Caco-2 (cell line): ENCODE measurements at regions of chr3 and their contacts with region 1.

Region 1: GRCh38 chr3:197456261-197457091 is 99.3 kb downstream of the BDH1 start:
- DNase-seq: peak; percentile 89 to 90
- H3K4me3 ChIP-seq: peak overlapping the region; percentile 54
- H3K4me3 Mint-ChIP-seq: peak overlapping the region; percentile 87
- H3K27ac Mint-ChIP-seq: peak overlapping the region; percentile 90
- H3K4me1 ChIP-seq: peaks cover 31% of the 10 kb centered on the region
- H3K4me1 Mint-ChIP-seq: peaks cover 18% of the 10 kb centered on the region
- H3K27me3 ChIP-seq: no peaks in the 10 kb centered on the region
- H3K27me3 Mint-ChIP-seq: no peaks in the 10 kb centered on the region
- CTCF ChIP-seq: no peak

Region 2: DNA sequence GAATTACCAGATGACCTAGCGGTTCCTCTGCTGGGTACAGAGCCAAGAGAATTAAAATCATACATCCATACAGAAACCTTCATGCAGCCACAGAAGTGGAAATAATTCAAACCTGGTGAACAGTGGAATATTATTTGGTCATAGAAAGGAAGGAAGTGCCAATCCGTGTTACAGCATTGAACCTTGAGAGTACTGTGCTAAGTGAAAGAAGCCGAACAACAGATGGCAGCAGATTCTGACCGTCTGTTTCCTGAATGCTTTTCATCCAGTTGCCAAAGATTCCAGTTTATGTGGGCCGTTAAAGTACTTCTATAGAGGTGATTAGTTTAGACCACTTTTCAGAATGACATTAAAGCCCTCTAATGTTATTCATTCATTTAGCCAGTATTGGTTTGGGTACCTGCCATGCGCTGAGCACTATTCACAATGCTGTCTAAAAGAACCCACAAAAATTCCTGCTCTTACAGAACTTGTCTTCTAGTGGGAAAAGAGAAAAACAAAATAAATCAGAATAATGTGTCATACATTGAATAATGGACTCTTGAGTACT is 634.6 kb before region 1 on chr3:
- CTCF ChIA-PET with region 1: no interaction called
- POLR2A ChIA-PET with region 1: no interaction called
- intact Hi-C with region 1: no loop called
- DNase-seq: no peak
- H3K4me3 ChIP-seq: no peak overlapping the region
- H3K4me3 Mint-ChIP-seq: no peak overlapping the region
- H3K27ac Mint-ChIP-seq: no peak overlapping the region
- H3K4me1 ChIP-seq: no peaks in the 10 kb centered on the region
- H3K4me1 Mint-ChIP-seq: no peaks in the 10 kb centered on the region
- H3K27me3 ChIP-seq: no peaks in the 10 kb centered on the region
- H3K27me3 Mint-ChIP-seq: no peaks in the 10 kb centered on the region
- CTCF ChIP-seq: no peak

Region 3: GRCh38 chr3:197224034-197224444 is 232.4 kb before region 1 on chr3:
- CTCF ChIA-PET with region 1: no interaction called
- POLR2A ChIA-PET with region 1: no interaction called
- intact Hi-C with region 1: loop called (anchors 2 kb)
- DNase-seq: peak in 1 of 2 experiments; percentile 47
- H3K4me3 ChIP-seq: no peak overlapping the region
- H3K4me3 Mint-ChIP-seq: no peak overlapping the region
- H3K27ac Mint-ChIP-seq: no peak overlapping the region
- H3K4me1 ChIP-seq: peaks cover 41% of the 10 kb centered on the region
- H3K4me1 Mint-ChIP-seq: peaks cover 8% of the 10 kb centered on the region
- H3K27me3 ChIP-seq: no peaks in the 10 kb centered on the region
- H3K27me3 Mint-ChIP-seq: no peaks in the 10 kb centered on the region
- CTCF ChIP-seq: peak; percentile 52 to 68

Region 4: DNA sequence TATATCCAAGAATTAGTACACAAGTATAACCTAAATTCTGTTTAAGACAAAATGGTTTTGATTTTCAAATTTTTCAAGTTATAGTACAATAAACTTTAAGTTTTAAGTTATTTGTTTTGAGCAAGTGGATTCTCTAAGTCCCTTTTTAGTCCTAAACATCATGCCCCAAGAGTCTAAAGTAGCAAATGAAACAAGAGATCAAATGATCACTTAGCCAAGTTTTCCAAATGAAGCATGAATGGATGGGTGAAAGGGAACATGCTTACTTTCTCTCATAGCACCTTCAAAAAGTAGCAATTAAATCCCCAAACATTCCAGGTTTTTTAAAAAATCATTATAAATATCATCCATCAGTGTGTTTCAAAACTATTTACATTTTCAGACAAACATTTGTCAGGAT is 177.5 kb before region 1 on chr3:
- CTCF ChIA-PET with region 1: interaction called, 4 read pairs
- POLR2A ChIA-PET with region 1: no interaction called
- intact Hi-C with region 1: loop called (anchors 5 kb)
- DNase-seq: no peak
- H3K4me3 ChIP-seq: no peak overlapping the region
- H3K4me3 Mint-ChIP-seq: no peak overlapping the region
- H3K27ac Mint-ChIP-seq: no peak overlapping the region
- H3K4me1 ChIP-seq: peaks cover 10% of the 10 kb centered on the region; the same call in 1 of the 2 replicates
- H3K4me1 Mint-ChIP-seq: peaks cover 12% of the 10 kb centered on the region
- H3K27me3 ChIP-seq: no peaks in the 10 kb centered on the region
- H3K27me3 Mint-ChIP-seq: no peaks in the 10 kb centered on the region
- CTCF ChIP-seq: no peak

Region 5: GRCh38 chr3:197372047-197372666 is 84.3 kb before region 1 on chr3:
- CTCF ChIA-PET with region 1: interaction called, 3 read pairs
- POLR2A ChIA-PET with region 1: no interaction called
- intact Hi-C with region 1: loop called (anchors 1 kb)
- DNase-seq: peak; percentile 90 to 93
- H3K4me3 ChIP-seq: no peak overlapping the region
- H3K4me3 Mint-ChIP-seq: peak overlapping the region; percentile 7
- H3K27ac Mint-ChIP-seq: peak overlapping the region; percentile 90
- H3K4me1 ChIP-seq: peaks cover 57% of the 10 kb centered on the region
- H3K4me1 Mint-ChIP-seq: peaks cover 32% of the 10 kb centered on the region
- H3K27me3 ChIP-seq: no peaks in the 10 kb centered on the region
- H3K27me3 Mint-ChIP-seq: no peaks in the 10 kb centered on the region
- CTCF ChIP-seq: no peak

Region 6: GRCh38 chr3:197490098-197490497 is 33.6 kb after region 1 on chr3:
- CTCF ChIA-PET with region 1: no interaction called
- POLR2A ChIA-PET with region 1: interaction called, 3 read pairs
- intact Hi-C with region 1: loop called (anchors 2 kb)
- DNase-seq: peak; percentile 80 to 93
- H3K4me3 ChIP-seq: no peak overlapping the region
- H3K4me3 Mint-ChIP-seq: peak overlapping the region; percentile 44
- H3K27ac Mint-ChIP-seq: peak overlapping the region; percentile 97
- H3K4me1 ChIP-seq: peaks cover 37% of the 10 kb centered on the region
- H3K4me1 Mint-ChIP-seq: peaks cover 21% of the 10 kb centered on the region
- H3K27me3 ChIP-seq: no peaks in the 10 kb centered on the region
- H3K27me3 Mint-ChIP-seq: no peaks in the 10 kb centered on the region
- CTCF ChIP-seq: no peak

Region 7: GRCh38 chr3:197949754-197950660 is 493.5 kb after region 1 on chr3 and contains the start of gene RPL35A:
- CTCF ChIA-PET with region 1: no interaction called
- POLR2A ChIA-PET with region 1: no interaction called
- intact Hi-C with region 1: no loop called
- DNase-seq: peak; percentile 90 to 91
- H3K4me3 ChIP-seq: peak within 1 kb of the TSS; percentile 60
- H3K4me3 Mint-ChIP-seq: peak within 1 kb of the TSS; percentile 98
- H3K27ac Mint-ChIP-seq: peak within 1 kb of the TSS; percentile 100
- H3K4me1 ChIP-seq: peaks cover 8% of the 10 kb centered on the region; the same call in 1 of the 2 replicates
- H3K4me1 Mint-ChIP-seq: peaks cover 8% of the 10 kb centered on the region
- H3K27me3 ChIP-seq: no peaks in the 10 kb centered on the region
- H3K27me3 Mint-ChIP-seq: no peaks in the 10 kb centered on the region
- CTCF ChIP-seq: no peak
- total RNA-seq, gene RPL35A: 880 and 900 TPM in 2 replicates